ENCODE measurements at regions of chr9 and their contacts with region 1.

Region 1: DNA sequence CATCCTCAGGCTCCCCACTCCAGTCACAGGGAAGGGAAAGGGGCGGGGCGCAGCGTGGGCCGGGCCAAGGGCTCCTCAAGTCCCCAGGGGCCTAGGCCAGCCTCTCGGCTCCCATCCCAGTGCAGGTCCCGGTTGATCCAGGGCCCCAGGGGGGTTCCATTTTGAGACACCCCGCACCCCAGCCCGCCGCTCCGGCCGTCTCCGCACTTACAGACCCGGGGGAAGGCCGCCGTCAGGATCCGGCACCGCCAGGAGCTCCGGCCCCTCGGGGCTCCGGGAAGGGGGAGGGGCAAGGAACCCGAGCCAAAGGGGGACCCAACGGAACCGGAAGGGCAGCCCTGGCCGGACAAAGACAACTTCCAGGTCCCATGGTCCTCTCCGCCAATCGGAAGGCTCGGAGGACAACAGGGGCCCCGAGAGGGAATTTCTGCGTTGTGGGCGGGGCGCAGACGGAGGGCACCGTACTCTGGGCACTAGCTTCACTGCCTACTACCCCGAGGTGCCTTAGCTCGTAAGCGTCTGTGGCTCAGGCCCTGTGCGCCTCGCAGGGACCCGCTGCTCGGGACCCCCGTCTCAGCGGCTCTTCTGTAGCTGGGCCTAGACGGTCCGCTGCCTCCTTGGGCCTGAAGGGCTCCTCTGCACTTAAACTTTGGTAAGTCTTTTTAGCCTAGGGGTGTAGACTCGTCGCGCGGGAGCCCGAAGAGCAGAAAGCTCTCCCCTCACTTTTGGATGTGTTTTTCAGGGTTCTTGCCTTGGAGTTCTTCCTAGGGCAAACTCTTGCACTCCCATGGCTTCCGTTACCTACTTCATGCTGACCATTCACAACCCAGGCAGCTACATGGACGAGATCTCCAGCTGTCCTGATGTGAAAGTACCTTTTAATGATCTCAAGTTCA is at the start of gene ZBTB26:
- DNase-seq: peak; percentile 94
- H3K4me3 ChIP-seq: peak within 1 kb of the TSS; percentile 85 to 93 (median 91)
- H3K27ac ChIP-seq: peak within 1 kb of the TSS; percentile 77
- H3K4me1 ChIP-seq: peaks cover 14% of the 10 kb centered on the region
- H3K27me3 ChIP-seq: no peaks in the 10 kb centered on the region
- CTCF ChIP-seq: no peak
- total RNA-seq, gene ZBTB26: 3.0 to 5.0 TPM

Region 2: DNA sequence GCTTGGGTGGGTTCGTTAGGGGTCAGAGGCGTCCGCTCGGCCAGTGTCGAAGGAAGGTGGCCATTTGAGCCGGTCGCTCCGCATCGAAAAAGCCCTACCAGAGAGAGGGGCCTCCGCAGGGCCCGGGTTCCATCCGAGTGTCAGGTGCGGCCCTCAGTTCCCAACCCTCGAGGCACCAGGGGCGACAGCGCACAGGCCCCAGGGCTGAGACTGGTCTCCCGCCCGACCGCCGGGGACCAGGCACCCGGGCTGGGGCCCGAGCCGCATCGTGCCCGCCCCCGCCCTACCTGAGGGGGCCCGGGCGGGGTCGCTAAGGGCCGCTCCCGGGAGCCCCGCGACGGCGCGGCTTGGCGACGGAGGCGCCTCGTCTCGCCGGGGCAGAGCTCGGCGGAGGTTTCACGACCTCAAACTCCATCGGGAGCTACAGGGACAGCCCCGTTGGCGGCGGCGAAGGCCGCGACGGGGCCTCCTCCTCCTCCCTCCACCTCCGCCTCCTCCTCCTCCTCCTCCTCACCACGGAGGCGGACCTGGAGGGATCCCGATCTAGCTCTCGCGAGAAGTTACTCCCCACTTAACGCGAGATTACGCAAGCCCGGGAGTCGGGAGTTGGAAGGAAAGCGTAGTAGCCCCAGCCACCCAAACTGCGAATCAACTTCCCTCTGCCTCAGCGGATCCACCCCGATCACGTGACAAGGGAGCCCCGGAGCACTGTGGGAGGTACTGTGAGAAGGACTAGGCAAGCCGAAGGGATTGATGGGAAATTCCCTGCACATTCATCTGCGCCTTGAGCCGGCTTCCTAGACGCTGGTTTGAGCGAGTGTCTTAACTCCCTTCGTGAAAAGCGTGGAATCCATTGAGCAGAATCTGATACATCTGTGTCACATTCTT is 26.4 kb before region 1 on chr9 and contains the start of gene RC3H2:
- CTCF ChIA-PET with region 1: no interaction called
- dilution Hi-C with region 1: no loop called
- in situ Hi-C with region 1: no loop called
- intact Hi-C with region 1: loop called (anchors 2 kb)
- DNase-seq: peak; percentile 100
- H3K4me3 ChIP-seq: peak within 1 kb of the TSS; percentile 64 to 88 (median 80)
- H3K27ac ChIP-seq: peak within 1 kb of the TSS; percentile 84
- H3K4me1 ChIP-seq: peaks cover 2% of the 10 kb centered on the region
- H3K27me3 ChIP-seq: no peaks in the 10 kb centered on the region
- CTCF ChIP-seq: no peak
- total RNA-seq, gene RC3H2: 55.6 to 68.7 TPM

Region 3: GRCh38 chr9:122912964-122913673 is 18.4 kb before region 1 on chr9 and contains the start of gene ZBTB6:
- CTCF ChIA-PET with region 1: no interaction called
- dilution Hi-C with region 1: no loop called
- in situ Hi-C with region 1: no loop called
- intact Hi-C with region 1: loop called (anchors 1 kb)
- DNase-seq: peak; percentile 87
- H3K4me3 ChIP-seq: peak within 1 kb of the TSS; percentile 67 to 84 (median 81)
- H3K27ac ChIP-seq: peak within 1 kb of the TSS; percentile 76
- H3K4me1 ChIP-seq: peaks cover 9% of the 10 kb centered on the region
- H3K27me3 ChIP-seq: no peaks in the 10 kb centered on the region
- CTCF ChIP-seq: no peak
- total RNA-seq, gene ZBTB6: 8.2 to 18.3 TPM